Activated CD4-positive, alpha-beta T cell treated with anti-CD3 and anti-CD28 coated beads for 36 hours (primary cell): ENCODE measurements at regions of chr17 and their contacts with region 1.

Region 1: DNA sequence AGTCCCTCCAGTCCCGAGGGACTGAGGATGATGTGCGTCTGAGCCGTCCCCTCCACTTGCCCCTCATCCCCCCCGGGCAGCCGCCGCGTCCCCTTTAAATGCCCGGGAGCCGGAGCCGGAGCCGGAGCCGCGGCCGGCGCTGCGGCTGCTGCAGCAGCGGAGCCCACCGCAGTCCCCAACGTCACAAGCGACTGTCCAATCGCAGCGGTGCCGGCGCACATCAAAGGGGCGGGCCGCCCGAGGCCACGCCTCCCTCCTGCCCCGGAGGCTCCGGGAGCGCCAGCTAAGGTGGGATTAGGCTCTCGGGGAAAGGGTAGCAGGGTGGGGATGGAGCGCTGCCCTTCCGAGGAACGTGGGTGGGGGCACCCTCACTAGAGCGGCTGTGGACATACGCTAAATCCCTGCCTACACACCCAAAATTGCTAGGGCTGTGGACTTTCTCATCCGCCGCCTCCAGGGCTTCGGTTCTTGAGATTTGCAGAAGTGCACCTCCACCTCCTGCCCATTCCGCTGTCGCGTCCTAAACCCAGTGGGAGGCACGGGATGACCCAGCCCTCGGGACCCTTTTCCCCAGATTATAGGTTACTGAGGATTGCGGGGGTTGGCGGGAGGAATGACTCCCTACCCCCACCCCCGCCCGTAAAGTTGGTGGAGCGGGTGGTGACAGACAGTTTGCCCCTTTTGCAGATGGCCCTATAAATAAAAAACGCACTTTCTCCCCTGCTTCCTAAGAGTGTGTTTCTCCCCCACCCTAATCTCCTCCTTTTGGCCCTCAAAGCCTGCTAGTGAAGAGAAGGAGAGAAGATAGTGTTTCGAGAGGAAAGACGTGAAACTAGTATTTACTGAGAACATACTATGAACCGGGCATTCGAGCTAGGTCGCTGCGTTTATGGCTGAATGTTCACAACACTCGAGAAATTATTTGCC is at the start of gene PHOSPHO1:
- DNase-seq: peak; percentile 91
- ATAC-seq: peak; percentile 89
- H3K4me3 Mint-ChIP-seq: peak within 1 kb of the TSS; percentile 66
- H3K27ac Mint-ChIP-seq: no peak within 1 kb of the TSS
- H3K4me1 Mint-ChIP-seq: peaks cover 6% of the 10 kb centered on the region
- H3K27me3 Mint-ChIP-seq: peaks cover 19% of the 10 kb centered on the region
- total RNA-seq, gene PHOSPHO1: not detected

Region 2: GRCh38 chr17:48843172-48843900 is 387.6 kb before region 1 on chr17:
- CTCF ChIA-PET with region 1: no interaction called
- POLR2A ChIA-PET with region 1: no interaction called
- intact Hi-C with region 1: no loop called
- DNase-seq: no peak
- ATAC-seq: no peak
- H3K4me3 Mint-ChIP-seq: no peak overlapping the region
- H3K27ac Mint-ChIP-seq: no peak overlapping the region
- H3K4me1 Mint-ChIP-seq: peaks cover 39% of the 10 kb centered on the region
- H3K27me3 Mint-ChIP-seq: no peaks in the 10 kb centered on the region

Region 3: DNA sequence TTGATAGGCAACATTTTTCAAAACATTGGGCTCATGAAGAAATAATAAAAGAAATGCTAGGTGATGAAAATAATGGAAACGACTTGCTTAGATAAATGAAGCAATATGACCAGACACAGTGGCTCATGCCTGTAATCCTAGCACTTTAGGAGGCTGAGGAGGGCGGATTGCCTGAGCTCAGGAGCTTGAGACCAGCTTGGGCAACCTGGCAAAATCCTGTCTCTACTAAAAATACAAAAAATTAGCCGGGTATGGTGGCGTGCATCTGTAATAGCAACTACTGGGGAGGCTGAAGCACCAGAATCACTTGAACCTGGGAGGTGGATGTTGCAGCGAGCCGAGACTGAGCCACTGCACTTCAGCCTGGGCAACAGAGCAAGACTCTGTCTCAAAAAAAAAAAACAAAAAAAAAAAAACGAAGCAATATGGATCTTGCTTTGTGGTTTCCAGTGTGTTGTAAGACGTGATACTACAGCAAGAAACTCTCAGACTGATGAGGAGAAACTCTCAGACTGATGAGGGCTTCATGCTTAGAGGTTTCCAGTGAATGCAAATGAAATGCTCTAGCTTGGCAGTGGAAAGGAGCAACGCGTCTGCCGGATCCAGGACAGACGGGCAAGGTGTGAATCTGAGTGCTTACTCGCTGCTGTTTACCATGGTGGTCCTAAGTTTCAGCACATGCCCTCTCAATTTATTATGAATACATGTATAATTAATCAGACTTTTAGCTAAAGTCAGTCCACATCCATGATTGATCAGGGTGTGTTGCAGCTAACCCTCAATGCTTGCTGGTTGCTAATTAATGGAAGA is 245.3 kb before region 1 on chr17:
- CTCF ChIA-PET with region 1: no interaction called
- POLR2A ChIA-PET with region 1: no interaction called
- intact Hi-C with region 1: no loop called
- DNase-seq: no peak
- ATAC-seq: no peak
- H3K4me3 Mint-ChIP-seq: no peak overlapping the region
- H3K27ac Mint-ChIP-seq: no peak overlapping the region
- H3K4me1 Mint-ChIP-seq: no peaks in the 10 kb centered on the region
- H3K27me3 Mint-ChIP-seq: peaks cover 16% of the 10 kb centered on the region

Region 4: DNA sequence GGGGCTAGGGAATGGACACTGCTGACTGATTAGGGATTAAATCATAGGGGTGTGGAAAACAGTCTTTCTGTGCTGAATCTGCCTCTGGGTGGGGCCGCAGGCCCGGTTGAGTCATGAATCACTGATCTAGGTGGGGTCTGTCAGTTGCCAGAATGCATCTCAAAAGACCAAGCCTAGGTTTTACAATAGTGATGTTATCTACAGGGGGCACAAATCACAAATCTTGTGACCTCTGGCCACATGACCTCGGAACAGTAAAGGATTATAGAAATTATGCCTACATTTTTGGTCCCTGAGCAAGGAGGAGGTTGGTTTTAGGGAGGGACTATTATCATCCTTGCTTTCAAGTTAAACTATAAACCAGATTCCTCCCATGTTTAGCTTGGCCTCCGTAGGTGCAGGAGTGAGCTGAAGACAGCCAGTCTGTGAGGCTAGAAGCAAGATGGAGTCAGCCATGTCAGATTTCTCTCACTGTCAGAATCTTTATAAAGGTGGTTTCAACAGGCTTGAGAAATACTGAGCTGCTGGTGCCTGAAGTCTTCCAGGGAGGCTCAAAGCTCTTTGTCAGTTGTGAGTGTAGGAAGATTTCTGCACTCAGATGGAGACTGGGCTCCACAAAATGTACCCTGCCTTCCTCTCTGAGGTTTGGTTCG is 33.4 kb before region 1 on chr17:
- CTCF ChIA-PET with region 1: interaction called, 36 read pairs
- POLR2A ChIA-PET with region 1: interaction called, 3 read pairs
- intact Hi-C with region 1: loop called (anchors 1 to 2 kb)
- DNase-seq: no peak
- ATAC-seq: no peak
- H3K4me3 Mint-ChIP-seq: no peak overlapping the region
- H3K27ac Mint-ChIP-seq: no peak overlapping the region
- H3K4me1 Mint-ChIP-seq: peaks cover 26% of the 10 kb centered on the region
- H3K27me3 Mint-ChIP-seq: no peaks in the 10 kb centered on the region

Region 5: DNA sequence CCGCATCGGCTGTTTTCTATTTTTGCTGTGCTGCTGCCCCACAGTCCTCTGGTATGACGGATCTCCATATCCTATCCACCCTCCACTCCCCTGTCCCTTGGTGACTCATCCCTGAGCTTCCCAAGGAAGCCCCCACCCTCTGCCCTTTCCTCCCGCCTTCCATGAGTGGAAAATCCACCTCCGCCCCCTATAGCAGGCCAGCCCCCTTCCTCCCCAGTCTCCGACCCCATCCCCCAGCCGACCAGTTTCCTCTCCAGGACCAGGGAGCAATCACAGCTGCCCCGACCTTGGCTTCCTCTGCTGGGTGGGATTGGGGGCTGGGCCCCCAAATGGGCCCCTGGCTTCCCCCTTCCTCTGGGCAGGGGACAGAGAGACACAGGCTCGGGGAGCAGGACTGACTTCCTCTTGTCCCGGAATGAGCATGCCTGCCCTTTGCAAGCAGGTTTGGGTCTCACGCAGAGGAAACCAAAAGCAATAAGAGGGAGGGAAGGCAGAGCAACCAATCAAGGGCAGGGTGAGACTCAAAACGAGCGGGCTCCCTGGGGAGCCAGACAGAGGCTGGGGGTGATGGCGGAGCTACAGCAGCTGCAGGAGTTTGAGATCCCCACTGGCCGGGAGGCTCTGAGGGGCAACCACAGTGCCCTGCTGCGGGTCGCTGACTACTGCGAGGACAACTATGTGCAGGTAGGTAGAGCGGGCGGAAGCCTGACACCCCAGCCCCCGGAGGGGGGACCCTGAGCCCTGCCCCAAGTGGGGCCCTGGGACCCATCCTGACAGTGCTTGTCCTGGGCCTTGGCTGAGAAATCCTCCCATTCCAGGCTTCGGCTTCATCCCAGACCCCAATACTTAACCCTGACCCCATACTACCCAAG is 20.5 kb before region 1 on chr17 and contains the starts of genes ABI3 and GNGT2:
- CTCF ChIA-PET with region 1: interaction called, 61 read pairs
- POLR2A ChIA-PET with region 1: no interaction called
- intact Hi-C with region 1: loop called (anchors 1 to 2 kb)
- DNase-seq: peak; percentile 84
- ATAC-seq: peak; percentile 92
- H3K4me3 Mint-ChIP-seq: peak within 1 kb of the TSS; percentile 86
- H3K27ac Mint-ChIP-seq: peak within 1 kb of the TSS; percentile 97
- H3K4me1 Mint-ChIP-seq: peaks cover 62% of the 10 kb centered on the region
- H3K27me3 Mint-ChIP-seq: no peaks in the 10 kb centered on the region
- total RNA-seq, gene ABI3: 27.8 to 31.1 TPM
- total RNA-seq, gene GNGT2: 27.3 to 27.7 TPM

Region 6: DNA sequence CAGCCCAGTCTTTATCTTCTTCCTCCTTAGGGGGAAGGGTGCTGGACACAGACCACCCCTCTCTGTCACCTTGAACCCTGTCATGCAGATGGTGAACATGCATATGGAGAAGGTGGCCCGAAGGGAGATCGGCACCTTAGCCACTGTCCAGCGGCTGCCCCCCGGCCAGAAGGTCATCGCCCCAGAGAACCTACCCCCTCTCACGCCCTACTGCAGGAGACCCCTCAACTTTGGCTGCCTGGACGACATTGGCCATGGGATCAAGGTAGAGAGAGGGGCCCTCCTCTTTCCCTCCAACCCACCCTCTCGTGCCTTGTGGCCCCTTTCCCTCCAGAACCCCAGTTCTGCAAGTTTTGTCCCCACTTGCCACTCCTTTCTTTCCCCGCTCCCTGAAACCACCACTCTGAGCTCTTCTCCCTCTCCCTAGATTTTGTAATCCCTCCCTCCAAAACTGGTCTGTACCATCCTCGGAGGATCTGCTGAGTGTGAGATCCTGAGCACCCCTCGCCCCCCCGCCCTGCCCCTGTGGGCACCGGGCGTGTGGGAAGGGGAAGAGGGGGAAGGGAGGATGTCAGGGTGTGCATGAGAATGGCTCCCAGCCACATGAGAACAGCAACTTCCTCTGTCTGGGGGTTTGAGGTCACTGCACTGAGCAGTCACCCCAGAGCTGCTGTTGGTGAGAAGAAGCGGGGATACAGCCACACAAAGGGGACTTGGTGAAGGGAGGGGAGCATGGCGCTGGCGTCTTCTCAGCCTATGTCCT is 13.1 kb before region 1 on chr17:
- CTCF ChIA-PET with region 1: interaction called, 61 read pairs
- POLR2A ChIA-PET with region 1: no interaction called
- intact Hi-C with region 1: no loop called
- DNase-seq: peak; percentile 66
- ATAC-seq: peak; percentile 73
- H3K4me3 Mint-ChIP-seq: peak overlapping the region; percentile 54
- H3K27ac Mint-ChIP-seq: peak overlapping the region; percentile 86
- H3K4me1 Mint-ChIP-seq: peaks cover 63% of the 10 kb centered on the region
- H3K27me3 Mint-ChIP-seq: no peaks in the 10 kb centered on the region

Region 7: GRCh38 chr17:49260011-49260921 is 29.4 kb after region 1 on chr17:
- CTCF ChIA-PET with region 1: interaction called, 5 read pairs
- POLR2A ChIA-PET with region 1: no interaction called
- intact Hi-C with region 1: loop called in 1 of 2 experiments (anchors 2 kb)
- DNase-seq: peak; percentile 72
- ATAC-seq: peak; percentile 89
- H3K4me3 Mint-ChIP-seq: peak overlapping the region; percentile 70
- H3K27ac Mint-ChIP-seq: peak overlapping the region; percentile 82
- H3K4me1 Mint-ChIP-seq: peaks cover 7% of the 10 kb centered on the region
- H3K27me3 Mint-ChIP-seq: no peaks in the 10 kb centered on the region

Region 8: GRCh38 chr17:49290690-49291359 is 59.9 kb after region 1 on chr17:
- CTCF ChIA-PET with region 1: interaction called, 3 read pairs
- POLR2A ChIA-PET with region 1: no interaction called
- intact Hi-C with region 1: loop called in 1 of 2 experiments (anchors 5 kb)
- DNase-seq: peak; percentile 20
- ATAC-seq: no peak
- H3K4me3 Mint-ChIP-seq: no peak overlapping the region
- H3K27ac Mint-ChIP-seq: no peak overlapping the region
- H3K4me1 Mint-ChIP-seq: peaks cover 6% of the 10 kb centered on the region
- H3K27me3 Mint-ChIP-seq: no peaks in the 10 kb centered on the region